ENCODE measurements at regions of chr3 and their contacts with region 1.

Region 1: GRCh38 chr3:16319307-16319706 is 54.3 kb downstream of the OXNAD1 start:
- DNase-seq: peak; percentile 65 to 91 (median 75)
- ATAC-seq: peak; percentile 85
- H3K4me3 ChIP-seq: no peak overlapping the region
- H3K4me3 Mint-ChIP-seq: peak overlapping the region; percentile 23
- H3K27ac ChIP-seq: peak overlapping the region; percentile 42 to 48
- H3K27ac Mint-ChIP-seq: peak overlapping the region; percentile 94
- H3K4me1 ChIP-seq: peaks cover 68% of the 10 kb centered on the region
- H3K4me1 Mint-ChIP-seq: peaks cover 72% of the 10 kb centered on the region
- H3K27me3 ChIP-seq: no peaks in the 10 kb centered on the region
- H3K27me3 Mint-ChIP-seq: no peaks in the 10 kb centered on the region
- CTCF ChIP-seq: peak; percentile 72

Region 2: DNA sequence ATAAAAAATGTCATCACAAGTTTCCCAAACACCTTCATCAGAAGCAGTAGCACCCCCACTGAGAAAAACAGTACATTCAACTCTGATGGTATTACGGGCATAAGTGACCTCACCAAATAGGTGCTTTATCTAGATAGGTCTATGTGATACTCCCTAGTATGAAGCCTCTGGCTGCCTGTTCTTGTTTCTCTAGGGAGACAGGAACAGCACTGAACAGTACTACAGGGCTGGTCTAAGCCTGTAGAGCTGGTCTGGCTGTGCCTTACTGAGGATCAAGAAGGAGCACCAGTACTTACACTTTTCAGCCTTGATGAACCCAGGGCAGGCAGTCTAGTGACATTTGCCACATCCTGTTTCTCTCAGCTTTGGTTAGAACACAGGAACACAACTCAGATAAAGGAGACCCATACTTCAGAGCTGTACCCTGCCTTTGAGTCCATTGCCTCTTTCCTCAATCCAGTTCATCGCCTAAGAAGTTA is 18.4 kb before region 1 on chr3:
- CTCF ChIA-PET with region 1: interaction called, 208 read pairs
- POLR2A ChIA-PET with region 1: interaction called, 268 read pairs
- intact Hi-C with region 1: loop called in 1 of 2 experiments (anchors 2 kb)
- DNase-seq: peak; percentile 43 to 90 (median 52)
- ATAC-seq: peak; percentile 73
- H3K4me3 ChIP-seq: peak overlapping the region; percentile 33
- H3K4me3 Mint-ChIP-seq: peak overlapping the region; percentile 91
- H3K27ac ChIP-seq: peak overlapping the region; percentile 63 to 81
- H3K27ac Mint-ChIP-seq: peak overlapping the region; percentile 96
- H3K4me1 ChIP-seq: peaks cover 71% of the 10 kb centered on the region
- H3K4me1 Mint-ChIP-seq: peaks cover 97% of the 10 kb centered on the region
- H3K27me3 ChIP-seq: no peaks in the 10 kb centered on the region
- H3K27me3 Mint-ChIP-seq: no peaks in the 10 kb centered on the region
- CTCF ChIP-seq: no peak

Region 3: DNA sequence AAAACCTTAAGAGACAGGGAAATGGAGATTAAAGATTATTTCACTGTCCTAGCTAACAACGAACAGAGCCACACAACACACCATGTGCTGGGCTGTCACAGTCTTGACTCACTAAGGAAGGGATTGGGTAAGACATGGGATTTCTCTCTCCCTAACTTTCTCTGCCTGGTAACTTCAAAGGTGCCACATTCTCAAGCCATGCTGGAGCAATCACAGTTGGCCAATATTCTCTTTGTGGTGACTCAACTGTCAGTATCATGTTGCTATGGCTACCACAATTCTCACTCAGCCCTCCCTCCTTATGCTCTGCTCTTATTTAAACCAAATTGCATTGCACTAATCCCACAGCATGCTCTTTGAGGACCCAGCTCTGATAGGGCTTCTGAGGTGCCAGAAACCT is 19.7 kb after region 1 on chr3:
- CTCF ChIA-PET with region 1: no interaction called
- POLR2A ChIA-PET with region 1: interaction called, 13 read pairs
- intact Hi-C with region 1: loop called in 1 of 2 experiments (anchors 2 kb)
- DNase-seq: peak in 4 of 14 experiments; percentile 32 to 70 (median 62)
- ATAC-seq: peak; percentile 65
- H3K4me3 ChIP-seq: no peak overlapping the region
- H3K4me3 Mint-ChIP-seq: peak overlapping the region; percentile 70
- H3K27ac ChIP-seq: peak overlapping the region; percentile 47 to 66
- H3K27ac Mint-ChIP-seq: peak overlapping the region; percentile 82
- H3K4me1 ChIP-seq: peaks cover 43% of the 10 kb centered on the region
- H3K4me1 Mint-ChIP-seq: peaks cover 81% of the 10 kb centered on the region
- H3K27me3 ChIP-seq: no peaks in the 10 kb centered on the region
- H3K27me3 Mint-ChIP-seq: no peaks in the 10 kb centered on the region
- CTCF ChIP-seq: no peak

Region 4: DNA sequence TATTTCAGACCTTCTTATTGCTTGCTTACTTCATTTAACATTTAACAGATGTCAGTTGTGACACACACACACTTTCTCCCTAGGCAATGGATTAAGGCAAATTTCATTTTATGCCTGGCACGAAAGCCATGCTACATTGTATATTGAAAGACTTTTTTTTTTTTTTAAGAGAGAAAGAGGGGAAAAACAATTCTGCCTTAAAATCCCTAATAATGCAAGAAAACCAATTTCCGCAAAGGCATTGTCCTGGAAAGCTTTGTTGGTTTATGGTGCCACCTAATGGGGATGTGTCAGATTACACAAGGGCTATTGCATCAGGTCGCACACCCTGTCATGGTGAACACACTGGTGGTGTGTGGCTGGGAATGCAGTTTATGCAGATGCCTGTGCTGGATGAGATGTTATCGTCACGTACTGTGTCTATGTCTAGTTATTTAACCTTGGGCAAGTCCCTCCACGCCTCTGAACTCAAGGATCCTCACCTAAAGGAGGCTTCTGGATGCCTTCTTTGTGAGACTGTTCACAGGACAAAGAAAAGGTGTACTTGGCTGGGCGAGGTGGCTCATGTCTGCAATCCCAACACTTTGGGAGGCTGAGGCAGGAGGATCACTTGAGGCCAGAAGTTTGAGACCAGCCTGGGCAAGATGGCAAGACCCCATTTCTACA is 231.5 kb after region 1 on chr3:
- CTCF ChIA-PET with region 1: interaction called, 4 read pairs
- POLR2A ChIA-PET with region 1: no interaction called
- intact Hi-C with region 1: loop called in 1 of 2 experiments (anchors 1 kb)
- DNase-seq: peak; percentile 43 to 90 (median 62)
- ATAC-seq: peak; percentile 100
- H3K4me3 ChIP-seq: no peak overlapping the region
- H3K4me3 Mint-ChIP-seq: no peak overlapping the region
- H3K27ac ChIP-seq: no peak overlapping the region
- H3K27ac Mint-ChIP-seq: peak overlapping the region; percentile 16
- H3K4me1 ChIP-seq: peaks cover 5% of the 10 kb centered on the region
- H3K4me1 Mint-ChIP-seq: no peaks in the 10 kb centered on the region
- H3K27me3 ChIP-seq: no peaks in the 10 kb centered on the region
- H3K27me3 Mint-ChIP-seq: peaks cover 4% of the 10 kb centered on the region
- CTCF ChIP-seq: peak; percentile 91

Measured in CD4-positive, alpha-beta T cell (primary cell).